ENCODE measurements at regions of chr6 and their contacts with region 1.

Region 1: DNA sequence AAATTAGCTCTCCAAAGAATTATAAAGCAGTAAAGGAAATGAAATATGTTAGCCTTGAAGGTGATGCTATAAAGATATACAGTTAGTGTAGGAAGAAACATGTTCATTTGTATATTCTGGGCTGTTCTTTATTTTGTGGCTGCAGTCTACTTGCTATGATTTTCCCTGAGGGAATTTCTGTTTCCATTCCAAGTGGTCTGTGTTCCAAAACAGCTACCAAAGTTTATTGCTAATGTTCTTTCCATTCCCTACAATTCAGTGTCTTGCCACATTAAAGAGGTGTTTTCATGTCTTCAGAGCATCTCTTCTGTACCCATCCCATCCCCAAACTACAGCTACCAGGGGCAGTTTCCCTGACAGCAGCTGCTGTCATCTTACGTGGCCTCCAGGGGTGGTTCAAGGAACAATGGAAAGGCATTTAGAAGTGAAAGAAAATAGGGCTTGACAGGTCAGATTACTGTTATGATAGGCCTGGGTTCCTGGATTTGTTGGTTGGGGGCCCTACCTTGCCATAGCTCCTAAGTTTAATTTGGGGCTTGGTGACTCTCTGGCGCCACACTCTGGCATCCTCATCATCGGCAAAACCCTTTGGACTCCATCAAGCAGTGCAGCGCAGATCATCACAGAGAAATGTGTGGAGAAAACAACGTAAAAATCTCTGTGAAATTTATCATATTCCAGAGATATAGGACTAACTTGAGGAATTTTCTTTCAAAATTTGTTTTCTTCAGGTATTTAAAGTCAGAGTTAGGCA is 33.8 kb upstream of the AIG1 start:
- DNase-seq: peak; percentile 60
- H3K4me3 Mint-ChIP-seq: no peak overlapping the region
- H3K27ac Mint-ChIP-seq: no peak overlapping the region
- H3K4me1 Mint-ChIP-seq: no peaks in the 10 kb centered on the region
- H3K27me3 Mint-ChIP-seq: no peaks in the 10 kb centered on the region

Region 2: DNA sequence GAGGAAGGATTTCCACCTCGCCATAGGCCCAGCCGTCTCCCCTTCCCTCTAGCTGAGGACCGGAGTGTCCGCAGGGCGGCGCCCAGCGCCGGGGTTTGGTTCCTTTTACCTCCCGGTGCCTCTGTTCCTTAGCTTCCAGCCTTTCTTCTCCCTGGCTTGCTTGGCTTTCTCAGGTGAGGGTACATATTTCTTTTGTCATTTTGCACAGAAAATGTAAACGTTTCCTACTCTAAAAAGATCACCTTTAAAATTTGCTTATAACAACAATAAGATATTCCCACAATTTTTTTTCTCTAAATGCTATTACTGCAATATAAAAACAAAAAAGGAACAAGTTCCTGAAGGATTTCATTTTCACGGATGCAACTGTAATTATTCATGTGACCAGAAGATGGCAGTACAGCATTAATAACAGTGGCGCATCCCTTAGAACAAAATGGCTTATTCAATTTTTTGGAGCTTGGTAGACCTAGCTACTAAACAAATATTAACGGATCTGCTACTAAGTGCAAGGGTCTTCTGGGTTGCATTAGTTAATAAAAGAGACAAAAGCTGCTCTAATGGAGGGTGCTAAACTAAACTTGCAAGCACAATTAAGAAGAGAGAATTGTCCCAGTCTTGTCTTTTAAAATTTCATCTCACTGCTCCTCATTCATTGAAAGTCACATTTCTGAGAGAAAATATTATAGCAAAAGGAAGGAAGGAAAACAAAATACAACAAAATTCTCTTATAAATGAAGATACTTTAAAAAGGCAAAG is 552.2 kb before region 1 on chr6:
- CTCF ChIA-PET with region 1: interaction called, 13 read pairs
- DNase-seq: no peak
- H3K4me3 Mint-ChIP-seq: no peak overlapping the region
- H3K27ac Mint-ChIP-seq: no peak overlapping the region
- H3K4me1 Mint-ChIP-seq: peaks cover 11% of the 10 kb centered on the region
- H3K27me3 Mint-ChIP-seq: no peaks in the 10 kb centered on the region

Region 3: GRCh38 chr6:142692942-142693341 is 333.9 kb before region 1 on chr6:
- CTCF ChIA-PET with region 1: interaction called, 55 read pairs
- DNase-seq: peak; percentile 72
- H3K4me3 Mint-ChIP-seq: no peak overlapping the region
- H3K27ac Mint-ChIP-seq: no peak overlapping the region
- H3K4me1 Mint-ChIP-seq: peaks cover 10% of the 10 kb centered on the region
- H3K27me3 Mint-ChIP-seq: no peaks in the 10 kb centered on the region

Region 4: DNA sequence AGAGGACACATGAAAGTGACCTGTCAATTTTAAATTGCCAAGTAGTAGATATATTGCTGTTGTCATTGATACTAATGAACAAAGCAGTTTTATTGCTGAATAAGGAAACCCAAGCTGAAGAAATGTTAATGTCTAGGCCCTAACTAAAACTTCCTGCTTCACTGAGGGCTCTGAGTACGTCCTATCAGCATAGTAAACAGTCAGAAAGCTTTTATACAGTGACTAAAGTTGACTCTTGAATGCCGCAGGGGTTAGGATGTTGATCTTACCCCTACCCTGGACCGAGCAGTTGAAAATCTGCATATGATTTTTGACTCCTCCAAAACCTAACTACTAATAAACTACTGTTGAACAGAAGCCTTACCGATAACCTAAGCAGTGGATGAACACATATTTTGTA is 230.8 kb before region 1 on chr6:
- CTCF ChIA-PET with region 1: no interaction called
- DNase-seq: no peak
- H3K4me3 Mint-ChIP-seq: no peak overlapping the region
- H3K27ac Mint-ChIP-seq: no peak overlapping the region
- H3K4me1 Mint-ChIP-seq: peaks cover 15% of the 10 kb centered on the region
- H3K27me3 Mint-ChIP-seq: no peaks in the 10 kb centered on the region